ENCODE measurements at regions of chr11 and their contacts with region 1.

Region 1: DNA sequence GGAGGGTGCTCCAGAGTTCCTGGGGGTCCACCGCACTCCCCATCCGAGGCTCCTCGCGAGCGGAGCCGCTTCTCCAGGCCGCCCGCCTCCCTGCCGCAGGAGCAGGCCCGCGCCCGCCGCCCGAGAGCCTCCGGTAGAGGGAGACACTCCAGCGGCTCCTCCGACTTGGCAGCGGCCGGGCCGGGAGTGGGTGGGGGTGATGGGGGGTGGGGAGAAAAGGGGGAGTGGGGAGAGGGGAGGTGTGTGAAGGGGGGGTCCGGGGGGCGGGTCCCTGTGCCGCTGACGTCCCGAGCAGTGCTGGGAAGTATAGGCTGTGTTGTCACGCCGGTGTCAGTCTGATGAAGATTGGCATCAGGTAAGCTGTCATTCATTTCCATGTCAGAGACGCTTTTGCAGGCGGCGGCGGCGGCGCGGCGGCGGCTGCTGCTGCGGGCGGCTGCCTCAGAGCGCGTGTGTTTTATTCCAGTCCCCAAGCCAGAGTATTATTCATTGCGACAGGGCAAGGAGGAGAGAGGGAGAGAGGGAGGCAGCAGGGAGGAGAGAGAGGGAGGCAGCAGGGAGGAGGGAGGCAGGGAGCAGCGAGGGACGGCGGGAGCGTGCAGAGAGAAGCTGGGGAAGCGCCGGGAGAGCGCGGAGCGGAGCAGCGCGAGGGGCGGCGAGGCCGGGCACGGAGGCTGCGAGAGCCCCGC is at the start of gene PKNOX2:
- DNase-seq: peak; percentile 84 to 92
- ATAC-seq: peak; percentile 74 to 83 (median 79)
- H3K4me3 ChIP-seq: peak within 1 kb of the TSS; percentile 84
- H3K27ac ChIP-seq: peak within 1 kb of the TSS; percentile 89
- H3K4me1 ChIP-seq: peaks cover 33% of the 10 kb centered on the region
- H3K27me3 ChIP-seq: no peaks in the 10 kb centered on the region
- CTCF ChIP-seq: peak; percentile 63
- total RNA-seq, gene PKNOX2: 14.5 to 30.5 (median 26.4) TPM

Region 2: DNA sequence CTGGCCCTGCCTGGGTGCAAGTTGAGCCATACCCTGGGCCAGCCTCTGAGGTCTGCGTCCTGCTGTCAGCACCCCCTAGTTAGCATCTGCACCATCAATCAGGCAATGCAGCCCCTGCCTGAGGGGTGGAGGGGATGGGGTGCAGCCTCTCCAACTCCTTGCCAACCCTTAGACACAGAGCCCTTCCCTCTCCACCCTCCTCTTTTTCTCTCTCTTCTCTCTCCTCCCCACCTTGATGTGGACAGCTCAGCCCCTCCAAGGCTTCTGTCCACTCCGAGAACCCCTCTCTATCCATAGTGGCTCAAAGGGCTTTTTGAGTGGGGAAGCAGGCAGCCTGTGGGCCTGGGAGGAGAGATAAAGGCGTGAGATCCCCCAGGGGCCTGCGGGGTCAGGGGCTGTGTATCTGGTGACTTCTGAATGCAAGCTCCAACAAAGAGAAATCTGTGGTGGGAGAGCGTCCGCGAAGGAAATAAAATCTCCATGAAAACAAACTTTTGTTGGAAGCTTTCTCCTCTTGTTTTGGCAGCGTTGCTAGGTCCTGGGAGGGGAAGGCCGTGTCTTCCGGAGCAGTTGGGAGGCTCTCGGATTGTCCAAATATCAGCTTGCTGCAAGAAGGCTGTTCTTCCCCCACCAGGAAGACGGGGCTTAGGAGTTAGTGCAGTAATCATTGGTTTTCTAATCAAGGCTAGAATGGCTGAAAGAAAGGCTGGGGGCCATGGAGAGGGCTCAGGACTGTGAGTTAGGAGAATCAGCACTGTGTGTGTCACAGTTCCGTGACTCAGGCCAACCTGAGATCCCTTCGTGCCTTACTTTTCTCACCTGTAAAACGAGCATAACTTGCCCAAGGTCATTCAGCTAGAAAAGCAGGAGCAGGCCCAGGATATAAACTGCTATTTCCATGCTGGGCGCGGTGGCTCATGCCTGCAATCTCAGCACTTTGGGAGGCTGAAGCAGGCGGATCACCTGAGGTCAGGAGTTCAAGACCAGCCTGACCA is 50.3 kb after region 1 on chr11:
- intact Hi-C with region 1: loop called in 1 of 2 experiments (anchors 5 kb)
- DNase-seq: no peak
- ATAC-seq: no peak
- H3K4me3 ChIP-seq: no peak overlapping the region
- H3K27ac ChIP-seq: peak overlapping the region; percentile 51
- H3K4me1 ChIP-seq: peaks cover 35% of the 10 kb centered on the region
- H3K27me3 ChIP-seq: no peaks in the 10 kb centered on the region
- CTCF ChIP-seq: no peak

Region 3: DNA sequence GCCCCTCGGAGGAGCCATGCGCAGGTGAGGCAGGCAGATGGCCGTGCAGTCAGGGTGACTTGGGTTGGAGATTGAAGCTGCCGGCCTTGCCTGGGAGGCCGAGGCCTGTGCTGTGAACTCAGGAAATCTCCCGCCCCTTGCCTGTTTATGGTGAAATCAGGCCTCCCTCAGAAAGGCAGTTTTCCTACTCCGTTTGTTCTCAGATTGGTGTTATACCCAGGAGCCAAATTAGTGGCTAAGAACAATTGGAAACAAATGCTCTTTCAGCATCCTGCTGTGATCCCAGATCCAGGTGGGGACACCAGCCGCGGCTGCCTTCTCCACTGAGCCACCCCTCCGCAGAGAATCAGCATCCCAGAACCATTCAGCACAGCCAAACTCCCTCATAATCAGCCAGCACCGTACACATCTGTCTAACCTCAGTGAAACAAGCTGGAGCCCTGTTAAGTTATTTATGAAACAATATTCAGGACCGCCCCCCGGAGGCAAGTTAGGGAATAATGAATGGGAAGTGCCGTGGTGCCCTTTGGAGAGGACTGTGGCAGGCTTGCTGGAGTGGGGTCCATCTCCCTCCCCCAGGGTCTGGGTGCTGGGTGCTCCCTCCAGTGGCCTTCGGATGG is 59.9 kb after region 1 on chr11:
- intact Hi-C with region 1: loop called (anchors 2 to 5 kb)
- DNase-seq: peak in 1 of 2 donors; percentile 31
- ATAC-seq: no peak
- H3K4me3 ChIP-seq: no peak overlapping the region
- H3K27ac ChIP-seq: peak overlapping the region; percentile 78
- H3K4me1 ChIP-seq: peaks cover 40% of the 10 kb centered on the region
- H3K27me3 ChIP-seq: no peaks in the 10 kb centered on the region
- CTCF ChIP-seq: peak; percentile 18

Region 4: DNA sequence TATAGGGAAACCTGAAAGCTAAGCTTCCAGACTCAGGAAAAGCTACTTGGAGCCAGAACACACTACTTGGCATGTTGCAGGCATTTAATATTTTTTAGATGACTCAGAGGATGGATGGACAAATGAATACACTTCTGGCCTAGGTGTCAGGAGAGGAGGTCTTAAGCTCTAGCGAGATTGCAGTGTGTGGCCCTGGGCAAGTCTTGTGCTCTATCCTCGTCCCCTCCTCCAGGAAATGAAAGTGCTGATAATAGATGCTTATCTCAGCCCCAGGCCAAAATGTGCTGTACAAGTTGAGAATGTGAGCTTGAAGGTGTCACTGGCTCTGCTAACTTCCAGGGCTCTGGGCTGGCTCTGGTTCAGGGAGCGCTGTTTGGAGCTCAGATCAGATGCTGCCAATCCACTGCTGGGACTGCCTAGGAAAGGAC is 136.2 kb after region 1 on chr11:
- intact Hi-C with region 1: loop called in 1 of 2 experiments (anchors 5 kb)
- DNase-seq: peak in 1 of 2 donors; percentile 75
- ATAC-seq: peak; percentile 67 to 84 (median 76)
- H3K4me3 ChIP-seq: no peak overlapping the region
- H3K27ac ChIP-seq: peak overlapping the region; percentile 61
- H3K4me1 ChIP-seq: peaks cover 31% of the 10 kb centered on the region
- H3K27me3 ChIP-seq: no peaks in the 10 kb centered on the region
- CTCF ChIP-seq: no peak

Region 5: GRCh38 chr11:125345421-125346178 is 181.0 kb after region 1 on chr11:
- intact Hi-C with region 1: loop called (anchors 2 kb)
- DNase-seq: peak; percentile 84 to 93
- ATAC-seq: peak; percentile 86 to 93 (median 88)
- H3K4me3 ChIP-seq: peak overlapping the region; percentile 2
- H3K27ac ChIP-seq: peak overlapping the region; percentile 67
- H3K4me1 ChIP-seq: peaks cover 41% of the 10 kb centered on the region
- H3K27me3 ChIP-seq: no peaks in the 10 kb centered on the region
- CTCF ChIP-seq: peak; percentile 91

Region 6: DNA sequence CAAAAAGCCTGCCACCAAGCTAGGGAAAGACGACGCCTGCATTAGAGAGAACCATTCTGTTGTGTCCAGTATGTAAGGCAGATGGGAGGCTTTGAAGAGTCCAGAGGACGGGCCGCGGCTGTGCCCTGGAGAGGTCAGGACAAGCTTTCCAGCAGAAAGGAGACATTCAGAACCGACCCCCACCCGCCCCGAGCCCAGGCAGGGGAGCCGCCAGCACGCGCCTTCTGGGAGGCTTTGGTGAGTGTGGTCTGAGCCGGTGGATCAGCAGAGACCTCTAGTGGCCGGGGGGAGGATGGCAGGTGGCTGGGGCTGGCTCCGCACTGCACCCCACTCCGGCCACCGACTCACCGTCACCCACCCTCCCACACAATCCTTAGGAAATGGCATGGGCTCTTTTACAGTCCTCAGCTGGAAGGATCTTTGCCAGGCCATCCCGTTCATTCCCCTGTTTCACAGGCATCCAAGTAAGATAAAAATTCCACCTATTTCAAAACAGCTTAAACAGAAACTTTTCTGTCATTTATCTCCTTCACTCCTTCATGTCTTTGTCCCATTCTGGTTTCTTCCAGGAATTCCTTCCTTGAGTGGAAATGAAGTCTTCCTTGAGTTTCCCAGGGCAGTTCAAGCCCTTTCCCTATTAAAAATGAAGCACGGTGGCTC is 240.3 kb after region 1 on chr11:
- intact Hi-C with region 1: loop called (anchors 2 to 5 kb)
- DNase-seq: peak; percentile 79 to 92
- ATAC-seq: peak; percentile 74 to 85 (median 81)
- H3K4me3 ChIP-seq: peak overlapping the region; percentile 39
- H3K27ac ChIP-seq: peak overlapping the region; percentile 92
- H3K4me1 ChIP-seq: peaks cover 64% of the 10 kb centered on the region
- H3K27me3 ChIP-seq: no peaks in the 10 kb centered on the region
- CTCF ChIP-seq: peak; percentile 96

Region 7: GRCh38 chr11:125429166-125429707 is 264.7 kb after region 1 on chr11:
- intact Hi-C with region 1: loop called (anchors 2 to 5 kb)
- DNase-seq: peak; percentile 58 to 78
- ATAC-seq: peak in 2 of 4 donors; percentile 23 to 47
- H3K4me3 ChIP-seq: no peak overlapping the region
- H3K27ac ChIP-seq: no peak overlapping the region
- H3K4me1 ChIP-seq: peaks cover 46% of the 10 kb centered on the region
- H3K27me3 ChIP-seq: no peaks in the 10 kb centered on the region
- CTCF ChIP-seq: peak; percentile 61